ENCODE measurements at regions of chr12 and their contacts with region 1.

Region 1: GRCh38 chr12:55930771-55931316 is at the start of gene DGKA:
- DNase-seq: no peak
- ATAC-seq: peak; percentile 3
- total RNA-seq, gene DGKA: 31.8 TPM

Region 2: GRCh38 chr12:55743116-55743921 is 187.5 kb before region 1 on chr12 and contains the start of gene GDF11:
- intact Hi-C with region 1: loop called (anchors 5 kb)
- DNase-seq: peak; percentile 75
- ATAC-seq: peak; percentile 34
- total RNA-seq, gene GDF11: 10.0 TPM

Region 3: GRCh38 chr12:55817346-55818139 is 113.3 kb before region 1 on chr12 and contains the starts of genes ORMDL2 and SARNP:
- intact Hi-C with region 1: loop called (anchors 5 kb)
- DNase-seq: peak; percentile 96
- ATAC-seq: peak; percentile 99
- total RNA-seq, gene ORMDL2: 25.2 TPM
- total RNA-seq, gene SARNP: 54.0 TPM